Lower leg skin (tissue), 4 donors: ENCODE measurements at regions of chrX and their contacts with region 1.

Region 1: DNA sequence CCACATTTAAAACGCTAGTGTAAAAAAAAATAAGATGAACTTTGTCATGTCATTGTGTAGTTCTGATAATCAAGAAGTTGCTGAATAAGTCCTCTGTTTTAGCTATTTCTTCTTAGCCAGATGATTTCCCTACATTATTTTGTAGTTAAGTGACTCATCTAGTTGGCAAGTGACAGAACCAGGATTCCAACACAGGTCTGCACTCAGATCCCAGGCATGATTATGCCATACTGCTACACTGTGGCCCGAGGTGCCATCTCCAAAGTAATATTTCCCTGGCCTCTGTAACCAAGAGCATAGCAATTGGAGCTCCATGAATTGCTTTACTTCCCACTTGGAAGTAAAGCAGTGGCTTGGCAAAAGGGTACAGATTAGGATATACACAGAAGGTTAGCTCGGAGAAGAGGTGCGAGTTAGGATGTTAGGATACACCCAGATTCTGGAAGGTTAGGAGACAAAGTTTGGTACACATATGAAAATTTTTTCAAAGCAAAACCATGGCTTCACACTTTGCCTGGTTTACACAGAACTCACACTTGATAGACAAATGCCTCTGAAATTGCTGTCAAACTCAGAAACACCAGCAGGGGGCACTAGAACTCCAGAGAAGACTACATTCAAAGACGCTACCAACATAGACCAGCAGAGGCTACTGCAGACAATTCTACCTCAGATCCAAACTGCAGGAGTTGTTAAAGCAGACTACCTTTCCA is 41.4 kb downstream of the SRPX2 start:
- DNase-seq: peak; percentile 70 to 88
- H3K4me3 ChIP-seq: no peak overlapping the region
- CTCF ChIP-seq: peak in 1 of 3 donors; percentile 69
- POLR2A ChIP-seq: no peak

Region 2: GRCh38 chrX:100768679-100769338 is 83.4 kb after region 1 on chrX:
- intact Hi-C with region 1: loop called (anchors 10 kb)
- DNase-seq: peak; percentile 78 to 97
- H3K4me3 ChIP-seq: no peak overlapping the region
- CTCF ChIP-seq: peak in 2 of 3 donors; percentile 94 to 96
- POLR2A ChIP-seq: no peak